Sciatic nerve (tissue), 2 donors: ENCODE measurements at regions of chr10 and their contacts with region 1.

Region 1: GRCh38 chr10:43671656-43672531 is 23.2 kb upstream of the ZNF32 start:
- DNase-seq: no peak
- ATAC-seq: peak; percentile 82

Region 2: GRCh38 chr10:43644252-43644651 is 27.6 kb before region 1 on chr10:
- intact Hi-C with region 1: loop called (anchors 1 kb)
- DNase-seq: no peak
- ATAC-seq: no peak

Region 3: DNA sequence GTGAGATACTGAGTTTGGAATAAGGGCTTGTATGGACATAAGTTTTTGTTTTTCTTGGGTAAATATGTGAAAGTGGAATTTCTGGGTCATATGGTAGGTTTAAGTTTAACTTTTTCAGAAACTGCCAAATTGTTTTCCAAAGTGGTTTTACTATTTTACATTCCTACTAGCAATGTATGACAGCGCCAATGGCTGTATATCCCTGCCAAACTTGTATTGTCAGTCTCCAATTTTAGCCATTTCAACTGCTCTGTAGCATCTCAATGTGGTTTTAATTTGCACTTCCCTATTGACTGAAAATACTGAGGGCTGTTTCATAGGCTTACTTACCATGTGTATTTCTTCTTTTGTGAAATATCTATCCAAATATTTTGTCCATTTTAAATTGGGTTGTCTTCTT is 67.3 kb after region 1 on chr10:
- intact Hi-C with region 1: no loop called
- DNase-seq: no peak
- ATAC-seq: no peak

Region 4: GRCh38 chr10:43955002-43955596 is 283.2 kb after region 1 on chr10:
- intact Hi-C with region 1: no loop called
- DNase-seq: no peak
- ATAC-seq: no peak

Region 5: GRCh38 chr10:44386546-44387052 is 714.7 kb after region 1 on chr10:
- intact Hi-C with region 1: loop called (anchors 5 kb)
- DNase-seq: peak; percentile 79
- ATAC-seq: peak; percentile 85

Region 6: DNA sequence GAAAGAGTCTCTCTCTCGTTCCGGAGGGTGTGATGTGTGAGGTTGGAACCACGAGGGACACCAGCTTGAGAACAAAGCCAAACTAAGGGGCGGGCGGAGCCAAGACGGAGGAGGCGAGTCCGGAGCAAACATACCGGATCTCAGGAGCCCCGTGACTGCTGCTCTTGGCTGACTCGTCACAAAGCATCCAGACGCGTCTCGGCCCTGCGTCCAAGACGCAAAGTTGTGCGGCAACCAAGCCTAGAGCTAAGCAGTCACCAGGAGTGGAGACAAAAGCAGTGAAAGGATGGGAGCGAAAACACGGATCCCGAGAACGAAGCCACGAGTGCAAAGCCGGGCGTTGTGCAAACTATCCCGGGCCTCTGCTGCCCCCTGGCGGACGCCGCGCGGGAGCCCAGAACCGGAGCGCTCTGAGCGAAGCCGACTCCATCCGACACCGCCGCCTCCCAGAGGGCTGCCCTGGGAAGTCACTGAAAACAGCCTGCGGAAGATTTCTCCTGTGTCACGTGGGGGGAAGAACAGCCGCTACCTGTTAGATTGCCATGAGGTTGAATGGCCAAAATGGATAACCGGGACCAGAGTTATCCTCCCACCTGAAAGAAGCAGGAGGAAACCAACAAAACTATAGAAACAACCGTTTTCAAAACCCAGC is 1192.9 kb after region 1 on chr10:
- intact Hi-C with region 1: loop called (anchors 5 kb)
- DNase-seq: peak; percentile 97
- ATAC-seq: peak; percentile 95